Panc1 (cell line): ENCODE measurements at regions of chr14 and their contacts with region 1.

Region 1: GRCh38 chr14:67674481-67675169 is at the start of gene VTI1B:
- DNase-seq: no peak
- ATAC-seq: peak; percentile 97
- H3K4me3 ChIP-seq: peak within 1 kb of the TSS; percentile 79 to 84
- H3K27ac ChIP-seq: peak within 1 kb of the TSS; percentile 79
- H3K4me1 ChIP-seq: peaks cover 7% of the 10 kb centered on the region
- H3K27me3 ChIP-seq: no peaks in the 10 kb centered on the region
- CTCF ChIP-seq: no peak
- total RNA-seq, gene VTI1B: 84.9 TPM

Region 2: DNA sequence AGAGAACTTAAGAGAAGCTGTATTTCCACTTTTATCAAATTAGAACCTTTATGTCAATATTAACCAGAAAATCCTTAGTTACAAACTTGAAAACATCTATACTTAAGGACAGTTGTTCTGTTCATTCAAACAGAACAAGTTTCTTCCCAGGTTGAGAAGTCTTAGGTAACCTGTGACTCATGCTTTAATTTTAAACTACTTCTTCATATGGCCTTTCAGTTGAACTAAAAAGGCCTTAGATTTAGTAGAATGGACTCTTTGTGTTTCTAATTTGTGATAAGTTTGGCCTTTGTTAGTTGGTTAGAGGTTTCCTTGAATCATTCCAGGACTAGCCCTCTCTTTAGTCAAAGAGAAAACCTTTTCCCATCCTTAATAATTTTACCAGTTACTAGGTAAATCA is 1987.9 kb before region 1 on chr14:
- CTCF ChIA-PET with region 1: no interaction called
- POLR2A ChIA-PET with region 1: no interaction called
- in situ Hi-C with region 1: no loop called
- intact Hi-C with region 1: no loop called
- DNase-seq: no peak
- ATAC-seq: no peak
- H3K4me3 ChIP-seq: no peak overlapping the region
- H3K27ac ChIP-seq: no peak overlapping the region
- H3K4me1 ChIP-seq: no peaks in the 10 kb centered on the region
- H3K27me3 ChIP-seq: no peaks in the 10 kb centered on the region
- CTCF ChIP-seq: no peak

Region 3: DNA sequence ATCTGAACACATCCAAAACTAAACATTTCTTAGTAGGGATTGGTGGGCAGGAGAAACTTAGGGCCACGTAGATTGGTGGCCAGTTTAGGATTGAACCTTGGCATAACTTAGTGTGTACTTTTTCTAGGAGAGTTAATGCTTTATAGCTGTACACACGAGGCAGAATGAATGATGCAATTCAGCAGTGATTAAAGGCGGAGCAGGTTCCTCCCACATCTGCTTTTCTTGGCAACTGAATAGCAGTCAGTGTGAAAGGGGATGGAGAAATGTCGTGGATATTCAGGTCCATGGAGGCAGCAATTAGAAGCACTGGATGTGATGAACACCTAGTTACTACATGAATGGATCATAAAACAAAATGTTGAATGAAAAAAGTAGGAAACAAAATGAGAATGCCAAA is 1768.3 kb before region 1 on chr14:
- CTCF ChIA-PET with region 1: no interaction called
- POLR2A ChIA-PET with region 1: interaction called, 13 read pairs
- in situ Hi-C with region 1: no loop called
- intact Hi-C with region 1: no loop called
- DNase-seq: no peak
- ATAC-seq: no peak
- H3K4me3 ChIP-seq: no peak overlapping the region
- H3K27ac ChIP-seq: no peak overlapping the region
- H3K4me1 ChIP-seq: no peaks in the 10 kb centered on the region
- H3K27me3 ChIP-seq: no peaks in the 10 kb centered on the region
- CTCF ChIP-seq: no peak

Region 4: DNA sequence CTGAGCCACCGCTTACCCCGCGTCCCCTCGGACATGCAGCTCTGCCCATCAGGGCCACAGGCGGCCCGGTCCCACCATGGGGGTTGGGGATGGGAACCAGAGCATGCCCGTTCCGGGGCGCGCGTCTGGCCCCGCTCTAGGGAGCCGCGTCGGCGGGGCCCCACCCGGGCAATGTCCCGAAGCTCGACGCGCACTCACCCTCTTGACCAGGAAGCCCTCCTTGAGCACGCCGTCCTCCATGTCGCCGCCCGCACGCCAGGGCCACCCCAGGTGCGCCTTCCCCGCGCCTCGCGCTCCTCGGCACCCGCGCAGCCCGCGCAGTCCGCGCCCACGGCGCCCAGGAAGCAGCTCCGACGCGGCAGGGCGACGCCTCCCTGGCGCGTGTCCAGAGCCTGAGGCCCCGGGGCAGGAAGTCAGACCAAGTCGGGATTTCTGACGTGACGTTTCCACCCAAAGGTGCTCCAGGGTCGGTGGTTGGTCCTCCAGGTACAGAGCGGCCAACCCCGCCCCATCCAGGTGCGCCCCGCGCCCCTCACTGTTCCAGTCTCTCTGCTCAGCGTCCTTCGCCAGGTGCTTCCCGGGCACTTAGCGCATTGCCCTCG is 262.7 kb before region 1 on chr14 and contains the start of gene PLEK2:
- CTCF ChIA-PET with region 1: no interaction called
- POLR2A ChIA-PET with region 1: no interaction called
- in situ Hi-C with region 1: no loop called
- intact Hi-C with region 1: no loop called
- DNase-seq: no peak
- ATAC-seq: peak; percentile 68
- H3K4me3 ChIP-seq: peak within 1 kb of the TSS; percentile 48 to 59
- H3K27ac ChIP-seq: peak within 1 kb of the TSS; percentile 44; the same call in 1 of the 2 replicates
- H3K4me1 ChIP-seq: peaks cover 3% of the 10 kb centered on the region; the same call in 1 of the 2 replicates
- H3K27me3 ChIP-seq: no peaks in the 10 kb centered on the region
- CTCF ChIP-seq: no peak
- total RNA-seq, gene PLEK2: 9.1 TPM